Pancreas (tissue), 10 donors: ENCODE measurements at regions of chr13 and their contacts with region 1.

Region 1: DNA sequence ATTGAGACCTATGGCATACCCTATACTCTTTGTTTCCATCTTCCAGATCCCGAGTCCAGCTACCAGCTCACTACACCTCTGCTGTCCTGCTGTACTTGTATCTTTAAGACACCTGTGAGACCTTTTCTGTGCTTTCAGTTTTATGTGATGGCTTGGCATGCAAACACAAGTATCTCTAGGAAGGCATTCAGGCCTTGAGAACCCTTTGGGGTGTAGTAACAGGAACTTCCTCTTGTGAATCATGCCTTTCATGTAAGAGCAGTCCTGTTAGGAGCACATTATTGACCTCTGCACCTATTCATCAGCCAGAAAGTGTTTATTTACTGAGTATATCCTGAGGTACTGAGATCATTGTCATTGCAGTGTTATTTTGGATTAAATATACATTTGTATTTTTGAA is 87.0 kb upstream of the HTR2A start:
- DNase-seq: no peak
- ATAC-seq: peak in 1 of 4 donors; percentile 34
- H3K4me3 ChIP-seq: no peak overlapping the region
- H3K27ac ChIP-seq: no peak overlapping the region
- H3K4me1 ChIP-seq: no peaks in the 10 kb centered on the region
- H3K27me3 ChIP-seq: no peaks in the 10 kb centered on the region
- CTCF ChIP-seq: no peak

Region 2: DNA sequence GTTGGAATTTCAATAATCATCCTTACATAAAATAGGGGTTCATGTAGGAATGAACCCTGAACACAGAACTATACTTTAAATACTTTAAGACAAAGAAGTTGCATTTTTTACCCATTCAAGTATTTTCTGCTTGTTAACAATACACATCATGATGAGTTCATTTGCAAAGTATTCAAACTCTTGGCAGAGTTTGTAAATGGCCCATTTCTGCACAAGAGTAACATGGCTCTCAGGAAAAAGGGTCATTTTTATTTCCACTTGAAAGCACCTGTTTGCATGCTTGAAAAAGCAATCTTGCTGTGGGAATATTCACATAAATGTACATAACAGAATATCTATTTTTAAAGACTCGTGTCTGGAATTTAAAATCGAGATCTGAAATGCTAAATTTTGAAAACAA is 205.0 kb before region 1 on chr13:
- intact Hi-C with region 1: no loop called
- DNase-seq: no peak
- ATAC-seq: no peak
- H3K4me3 ChIP-seq: no peak overlapping the region
- H3K27ac ChIP-seq: no peak overlapping the region
- H3K4me1 ChIP-seq: no peaks in the 10 kb centered on the region
- H3K27me3 ChIP-seq: no peaks in the 10 kb centered on the region
- CTCF ChIP-seq: no peak

Region 3: DNA sequence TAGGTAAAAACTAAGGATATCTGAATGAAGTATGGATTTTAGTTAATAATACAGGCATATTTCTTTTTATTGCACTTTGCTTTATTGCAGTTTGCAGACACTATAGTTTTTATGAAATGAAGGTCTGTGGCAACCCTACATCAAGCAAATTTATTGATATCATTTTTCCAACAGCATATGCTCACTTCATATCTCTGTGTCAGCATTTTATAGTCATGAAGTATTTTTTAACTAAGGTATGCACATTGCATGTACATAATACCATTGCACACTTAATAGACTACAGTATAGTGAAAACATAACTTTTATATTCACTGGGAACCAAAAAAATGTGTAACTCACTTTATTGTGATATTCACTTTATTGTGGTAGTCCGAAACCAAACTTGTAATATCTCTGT is 780.9 kb after region 1 on chr13:
- intact Hi-C with region 1: loop called in 1 of 3 experiments (anchors 10 kb)
- DNase-seq: no peak
- ATAC-seq: no peak
- H3K4me3 ChIP-seq: no peak overlapping the region
- H3K27ac ChIP-seq: no peak overlapping the region
- H3K4me1 ChIP-seq: no peaks in the 10 kb centered on the region
- H3K27me3 ChIP-seq: no peaks in the 10 kb centered on the region
- CTCF ChIP-seq: no peak